Activated naive CD4-positive, alpha-beta T cell treated with anti-CD3 and anti-CD28 coated beads, Interleukin-2, amount 10 ng/mL, durations not matched to agents 7 days and 5 days (primary cell): ENCODE measurements at regions of chr1 and their contacts with region 1.

Region 1: GRCh38 chr1:43414634-43415223 is 25.0 kb downstream of the SZT2 start:
- DNase-seq: peak; percentile 73
- H3K4me3 Mint-ChIP-seq: no peak overlapping the region
- H3K27ac Mint-ChIP-seq: peak overlapping the region; percentile 44
- H3K4me1 Mint-ChIP-seq: no peaks in the 10 kb centered on the region
- H3K27me3 Mint-ChIP-seq: no peaks in the 10 kb centered on the region

Region 2: GRCh38 chr1:43227143-43227764 is 187.5 kb before region 1 on chr1:
- CTCF ChIA-PET with region 1: interaction called, 73 read pairs
- DNase-seq: peak; percentile 90
- H3K4me3 Mint-ChIP-seq: no peak overlapping the region
- H3K27ac Mint-ChIP-seq: no peak overlapping the region
- H3K4me1 Mint-ChIP-seq: no peaks in the 10 kb centered on the region
- H3K27me3 Mint-ChIP-seq: peaks cover 46% of the 10 kb centered on the region

Region 3: GRCh38 chr1:43232482-43232881 is 182.2 kb before region 1 on chr1:
- CTCF ChIA-PET with region 1: interaction called, 73 read pairs
- DNase-seq: no peak
- H3K4me3 Mint-ChIP-seq: no peak overlapping the region
- H3K27ac Mint-ChIP-seq: no peak overlapping the region
- H3K4me1 Mint-ChIP-seq: no peaks in the 10 kb centered on the region
- H3K27me3 Mint-ChIP-seq: peaks cover 27% of the 10 kb centered on the region